Activated CD8-positive, alpha-beta T cell treated with anti-CD3 and anti-CD28 coated beads, Interleukin-2, amount 10 ng/mL, durations not matched to agents 7 days and 5 days (primary cell): ENCODE measurements at regions of chr3 and their contacts with region 1.

Region 1: GRCh38 chr3:185937689-185938463 is at the start of gene TRA2B:
- DNase-seq: peak; percentile 99
- ATAC-seq: peak; percentile 86
- H3K4me3 Mint-ChIP-seq: peak within 1 kb of the TSS; percentile 100
- H3K27ac Mint-ChIP-seq: peak within 1 kb of the TSS; percentile 100
- H3K4me1 Mint-ChIP-seq: peaks cover 23% of the 10 kb centered on the region
- H3K27me3 Mint-ChIP-seq: peaks cover 7% of the 10 kb centered on the region
- total RNA-seq, gene TRA2B: 271 to 277 TPM

Region 2: GRCh38 chr3:185924375-185924774 is 13.5 kb before region 1 on chr3:
- CTCF ChIA-PET with region 1: interaction called, 98 read pairs
- POLR2A ChIA-PET with region 1: interaction called, 107 read pairs
- DNase-seq: no peak
- ATAC-seq: no peak
- H3K4me3 Mint-ChIP-seq: no peak overlapping the region
- H3K27ac Mint-ChIP-seq: peak overlapping the region; percentile 46
- H3K4me1 Mint-ChIP-seq: peaks cover 65% of the 10 kb centered on the region
- H3K27me3 Mint-ChIP-seq: no peaks in the 10 kb centered on the region

Region 3: DNA sequence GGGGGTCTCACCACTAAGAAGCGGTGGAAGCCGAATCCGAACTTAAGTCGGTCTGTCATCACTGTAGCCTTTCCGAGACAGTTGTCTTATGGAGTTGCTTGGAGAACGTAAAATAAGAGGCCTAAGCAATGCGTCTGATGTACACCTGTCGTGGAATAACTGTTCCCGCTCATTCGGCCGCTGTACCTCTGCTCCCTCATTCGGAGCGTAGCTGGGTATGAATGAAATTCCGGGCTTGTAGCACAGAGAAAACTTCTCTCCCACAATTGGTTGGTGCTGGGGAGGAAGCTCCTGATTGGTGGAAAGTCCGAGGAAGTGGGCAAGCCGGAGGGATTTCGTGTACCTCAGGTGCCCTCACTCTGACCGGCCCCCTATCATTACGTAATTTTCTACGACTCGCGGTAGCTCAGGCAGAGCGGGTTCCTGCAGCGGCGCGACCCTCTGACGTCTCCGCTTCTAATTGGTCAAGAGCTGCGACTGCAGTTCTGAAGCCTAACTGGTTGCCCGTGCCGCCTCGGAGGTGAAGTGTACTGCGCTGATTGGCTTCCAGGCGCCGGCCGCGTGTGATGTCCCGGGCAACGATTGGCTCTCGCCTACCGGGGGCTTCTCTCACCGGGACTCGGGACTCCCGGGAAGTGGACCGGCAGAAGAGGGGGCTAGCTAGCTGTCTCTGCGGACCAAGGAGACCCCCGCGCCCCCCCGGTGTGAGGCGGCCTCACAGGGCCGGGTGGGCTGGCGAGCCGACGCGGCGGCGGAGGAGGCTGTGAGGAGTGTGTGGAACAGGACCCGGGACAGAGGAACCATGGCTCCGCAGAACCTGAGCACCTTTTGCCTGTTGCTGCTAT is 632.4 kb after region 1 on chr3 and contains the start of gene DNAJB11:
- CTCF ChIA-PET with region 1: interaction called, 12 read pairs
- POLR2A ChIA-PET with region 1: interaction called, 32 read pairs
- DNase-seq: peak; percentile 99
- ATAC-seq: peak; percentile 89
- H3K4me3 Mint-ChIP-seq: peak within 1 kb of the TSS; percentile 97
- H3K27ac Mint-ChIP-seq: peak within 1 kb of the TSS; percentile 99
- H3K4me1 Mint-ChIP-seq: peaks cover 60% of the 10 kb centered on the region
- H3K27me3 Mint-ChIP-seq: no peaks in the 10 kb centered on the region
- total RNA-seq, gene DNAJB11: 55.9 to 56.5 TPM